Activated B cell treated with CpG ODN at 0.5 μM for 24 hours (primary cell): ENCODE measurements at regions of chr10 and their contacts with region 1.

Region 1: DNA sequence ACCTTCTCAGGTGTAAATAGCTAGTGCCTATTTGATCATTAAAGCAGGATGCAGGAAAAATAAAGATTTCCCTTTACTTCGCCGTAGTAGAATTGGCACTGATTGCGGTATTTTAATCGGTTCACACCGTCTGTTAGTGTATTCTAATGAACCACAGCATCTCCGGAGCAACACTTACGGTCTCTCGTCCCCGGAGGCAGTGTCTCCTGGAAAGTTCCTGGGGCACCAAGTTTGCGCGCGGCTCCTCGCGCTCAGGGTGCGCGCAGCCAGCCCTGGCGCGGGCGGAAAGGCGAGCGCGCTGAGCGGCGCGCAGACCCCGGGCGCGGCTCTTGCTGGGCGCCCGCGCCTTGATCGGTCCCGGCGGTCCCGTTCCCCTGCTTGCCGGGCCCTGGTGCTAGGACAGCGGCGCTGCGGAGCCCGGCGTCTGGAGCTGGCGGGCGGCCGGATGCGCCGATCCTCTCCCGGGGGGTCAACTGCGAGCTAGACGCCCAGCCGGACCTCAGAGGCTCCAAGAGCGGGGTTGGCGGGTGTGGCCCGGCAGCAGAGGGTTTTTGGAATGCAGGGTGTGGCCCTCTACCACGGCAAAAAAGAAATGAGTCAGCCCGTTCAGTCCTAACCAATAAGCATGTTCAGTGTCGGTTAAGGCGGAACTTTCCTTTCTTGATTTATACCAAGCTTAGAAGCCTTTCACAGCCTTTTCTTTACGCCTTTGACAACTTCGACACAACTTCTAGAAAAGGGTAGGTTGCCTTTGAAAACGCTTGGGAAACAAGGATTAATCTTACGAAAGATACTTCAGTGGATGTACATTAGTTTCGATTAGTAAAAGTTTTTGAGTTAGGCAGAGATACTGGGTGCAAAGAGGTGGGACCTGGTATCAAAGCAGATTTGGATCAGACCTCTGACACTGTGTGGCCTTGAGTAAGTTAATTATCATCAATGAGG is 166.8 kb upstream of the ASAH2 start:
- DNase-seq: peak; percentile 48
- ATAC-seq: peak; percentile 87
- H3K4me3 Mint-ChIP-seq: peak overlapping the region; percentile 92
- H3K27ac Mint-ChIP-seq: peak overlapping the region; percentile 81
- H3K4me1 Mint-ChIP-seq: peaks cover 48% of the 10 kb centered on the region
- H3K27me3 Mint-ChIP-seq: no peaks in the 10 kb centered on the region
- CTCF ChIP-seq: no peak

Region 2: GRCh38 chr10:49172061-49172776 is 1245.9 kb before region 1 on chr10:
- CTCF ChIA-PET with region 1: no interaction called
- POLR2A ChIA-PET with region 1: interaction called, 10 read pairs
- intact Hi-C with region 1: no loop called
- DNase-seq: no peak
- ATAC-seq: peak; percentile 6
- H3K4me3 Mint-ChIP-seq: peak overlapping the region; percentile 28
- H3K27ac Mint-ChIP-seq: no peak overlapping the region
- H3K4me1 Mint-ChIP-seq: peaks cover 61% of the 10 kb centered on the region
- H3K27me3 Mint-ChIP-seq: no peaks in the 10 kb centered on the region
- CTCF ChIP-seq: no peak

Region 3: GRCh38 chr10:50234486-50234885 is 183.7 kb before region 1 on chr10:
- CTCF ChIA-PET with region 1: no interaction called
- POLR2A ChIA-PET with region 1: no interaction called
- intact Hi-C with region 1: no loop called
- DNase-seq: no peak
- ATAC-seq: no peak
- H3K4me3 Mint-ChIP-seq: no peak overlapping the region
- H3K27ac Mint-ChIP-seq: no peak overlapping the region
- H3K4me1 Mint-ChIP-seq: peaks cover 7% of the 10 kb centered on the region
- H3K27me3 Mint-ChIP-seq: peaks cover 19% of the 10 kb centered on the region
- CTCF ChIP-seq: no peak

Region 4: DNA sequence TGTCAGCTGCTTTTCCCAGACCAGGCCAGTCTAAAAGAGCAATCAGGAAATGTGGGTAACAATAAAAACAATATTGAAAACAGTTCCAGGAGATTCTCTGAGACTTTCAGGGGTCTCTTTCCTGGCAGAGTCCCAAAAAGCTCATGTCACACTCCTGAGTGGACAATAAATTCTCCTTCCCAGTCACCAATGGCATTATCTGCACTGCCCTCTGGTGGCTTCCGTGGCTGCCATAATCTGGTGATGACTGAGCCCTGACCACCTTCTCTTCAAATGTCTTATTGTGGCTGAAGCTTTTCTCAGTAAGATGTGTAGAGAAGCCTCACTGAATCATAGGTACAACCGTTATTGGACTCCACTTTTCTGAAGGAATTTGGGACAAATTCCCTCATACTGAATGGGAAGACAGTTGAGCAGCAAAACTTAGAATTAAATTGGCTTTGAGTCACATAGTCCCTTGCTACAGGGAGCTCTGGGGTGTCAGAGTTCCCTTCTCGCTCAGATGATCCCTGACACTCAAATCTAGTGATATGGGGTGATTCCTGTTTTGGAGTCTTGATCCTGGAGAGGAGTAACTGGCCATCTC is 142.4 kb before region 1 on chr10:
- CTCF ChIA-PET with region 1: interaction called, 5 read pairs
- POLR2A ChIA-PET with region 1: no interaction called
- intact Hi-C with region 1: loop called (anchors 1 kb)
- DNase-seq: no peak
- ATAC-seq: peak; percentile 71
- H3K4me3 Mint-ChIP-seq: no peak overlapping the region
- H3K27ac Mint-ChIP-seq: no peak overlapping the region
- H3K4me1 Mint-ChIP-seq: peaks cover 1% of the 10 kb centered on the region
- H3K27me3 Mint-ChIP-seq: peaks cover 13% of the 10 kb centered on the region
- CTCF ChIP-seq: no peak

Region 5: GRCh38 chr10:50362547-50363125 is 55.5 kb before region 1 on chr10:
- CTCF ChIA-PET with region 1: interaction called, 6 read pairs
- POLR2A ChIA-PET with region 1: no interaction called
- intact Hi-C with region 1: loop called (anchors 1 kb)
- DNase-seq: no peak
- ATAC-seq: peak; percentile 92
- H3K4me3 Mint-ChIP-seq: peak overlapping the region; percentile 29
- H3K27ac Mint-ChIP-seq: peak overlapping the region; percentile 87
- H3K4me1 Mint-ChIP-seq: peaks cover 53% of the 10 kb centered on the region
- H3K27me3 Mint-ChIP-seq: no peaks in the 10 kb centered on the region
- CTCF ChIP-seq: no peak

Region 6: GRCh38 chr10:50396491-50397311 is 21.5 kb before region 1 on chr10:
- CTCF ChIA-PET with region 1: interaction called, 3 read pairs
- POLR2A ChIA-PET with region 1: interaction called, 3 read pairs
- intact Hi-C with region 1: loop called (anchors 2 kb)
- DNase-seq: no peak
- ATAC-seq: peak; percentile 90
- H3K4me3 Mint-ChIP-seq: peak overlapping the region; percentile 42
- H3K27ac Mint-ChIP-seq: peak overlapping the region; percentile 69
- H3K4me1 Mint-ChIP-seq: peaks cover 32% of the 10 kb centered on the region
- H3K27me3 Mint-ChIP-seq: no peaks in the 10 kb centered on the region
- CTCF ChIP-seq: no peak

Region 7: GRCh38 chr10:50508315-50509051 is 90.3 kb after region 1 on chr10:
- CTCF ChIA-PET with region 1: no interaction called
- POLR2A ChIA-PET with region 1: interaction called, 4 read pairs
- intact Hi-C with region 1: loop called (anchors 5 kb)
- DNase-seq: no peak
- ATAC-seq: peak; percentile 80
- H3K4me3 Mint-ChIP-seq: peak overlapping the region; percentile 20
- H3K27ac Mint-ChIP-seq: peak overlapping the region; percentile 61
- H3K4me1 Mint-ChIP-seq: peaks cover 64% of the 10 kb centered on the region
- H3K27me3 Mint-ChIP-seq: no peaks in the 10 kb centered on the region
- CTCF ChIP-seq: no peak